PC-3 (cell line): ENCODE measurements at regions of chr10 and their contacts with region 1.

Region 1: DNA sequence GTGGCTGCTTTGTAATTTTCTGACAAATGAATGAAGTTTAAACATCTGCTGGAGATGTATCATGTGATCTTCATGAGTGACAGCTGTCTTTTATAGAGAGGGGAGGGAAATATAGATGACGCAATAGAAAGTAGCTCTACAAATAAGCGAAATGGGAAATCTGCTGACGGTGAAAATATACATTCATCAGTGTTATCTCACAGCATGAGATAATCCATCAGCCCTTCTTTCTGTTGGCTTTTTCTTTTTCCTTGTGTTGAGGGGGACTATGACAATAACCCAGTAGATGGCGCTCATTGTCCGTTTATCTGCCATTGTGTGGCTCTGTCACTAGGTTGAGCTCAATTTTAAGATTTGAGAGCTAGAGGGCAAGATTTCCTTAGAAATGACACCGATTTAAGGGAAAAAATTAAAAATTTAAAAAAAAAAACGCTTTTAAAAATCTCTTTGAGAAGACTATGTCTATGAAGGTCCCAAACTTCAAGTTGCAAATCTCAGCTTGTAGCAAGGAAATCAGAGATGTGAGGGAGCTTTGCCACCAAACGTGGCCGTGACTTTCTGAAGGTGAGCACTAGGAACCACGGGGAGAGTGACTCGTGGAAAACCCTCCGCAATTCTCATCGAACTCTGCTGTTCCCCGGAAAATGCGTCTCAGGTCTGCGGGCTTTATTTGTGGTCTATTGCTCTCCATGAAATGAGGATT is 114.6 kb upstream of the SFMBT2 start:
- DNase-seq: peak; percentile 69
- ATAC-seq: peak; percentile 76
- H3K4me3 ChIP-seq: no peak overlapping the region
- H3K27ac ChIP-seq: no peak overlapping the region
- H3K4me1 ChIP-seq: no peaks in the 10 kb centered on the region
- H3K27me3 ChIP-seq: 0 out of 2 replicates have a peak, but pooled peaks cover 7% of the 10 kb centered on the region
- CTCF ChIP-seq: peak; percentile 72

Region 2: GRCh38 chr10:7687228-7687907 is 161.9 kb after region 1 on chr10:
- CTCF ChIA-PET with region 1: interaction called, 56 read pairs
- POLR2A ChIA-PET with region 1: no interaction called
- intact Hi-C with region 1: loop called (anchors 1 kb)
- DNase-seq: peak; percentile 74
- ATAC-seq: peak; percentile 90
- H3K4me3 ChIP-seq: no peak overlapping the region
- H3K27ac ChIP-seq: no peak overlapping the region
- H3K4me1 ChIP-seq: no peaks in the 10 kb centered on the region
- H3K27me3 ChIP-seq: no peaks in the 10 kb centered on the region
- CTCF ChIP-seq: peak; percentile 79

Region 3: DNA sequence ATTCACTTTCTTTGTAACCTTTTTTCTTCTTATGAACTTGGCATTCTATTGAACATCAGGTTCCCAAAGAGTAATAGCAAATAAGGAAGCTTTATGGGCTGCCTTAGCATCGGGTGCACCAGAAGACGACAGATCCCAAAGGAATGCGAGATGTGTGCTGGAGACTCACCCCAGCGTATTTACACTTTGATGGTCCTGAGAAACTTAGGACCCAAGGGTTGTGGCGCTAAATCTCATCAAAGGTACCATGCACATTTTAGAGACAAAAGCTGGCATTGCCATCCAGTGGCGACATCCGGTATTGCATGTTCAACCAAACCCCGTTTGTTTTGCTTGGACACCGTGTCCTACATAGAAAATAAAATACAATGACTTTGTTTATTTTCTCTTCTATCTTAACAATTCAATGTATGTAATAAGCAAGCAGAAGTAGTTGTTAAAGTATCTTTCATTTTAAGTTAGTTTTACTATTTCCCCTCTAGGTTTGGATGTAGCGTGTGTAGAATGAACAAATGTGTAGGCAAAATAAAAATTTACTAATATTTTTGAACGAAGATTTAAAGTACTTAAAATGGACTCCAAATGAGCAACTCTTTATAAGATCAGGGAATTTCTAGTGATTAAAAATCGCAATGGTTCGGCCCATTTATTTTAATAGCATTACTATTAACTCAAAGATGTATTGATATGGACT is 1683.8 kb after region 1 on chr10:
- CTCF ChIA-PET with region 1: interaction called, 4 read pairs
- POLR2A ChIA-PET with region 1: no interaction called
- intact Hi-C with region 1: loop called (anchors 1 kb)
- DNase-seq: peak; percentile 66
- ATAC-seq: peak; percentile 43; the same call in 1 of the 2 replicates
- H3K4me3 ChIP-seq: no peak overlapping the region
- H3K27ac ChIP-seq: no peak overlapping the region
- H3K4me1 ChIP-seq: no peaks in the 10 kb centered on the region
- H3K27me3 ChIP-seq: peaks cover 16% of the 10 kb centered on the region; the same call in 1 of the 2 replicates
- CTCF ChIP-seq: peak; percentile 69